Heart right ventricle (tissue), 16 donors: ENCODE measurements at regions of chr4 and their contacts with region 1.

Region 1: GRCh38 chr4:165177725-165178666 is 29.4 kb upstream of the KLHL2 start:
- DNase-seq: no peak
- ATAC-seq: no peak
- H3K4me3 ChIP-seq: no peak overlapping the region
- H3K27ac ChIP-seq: no peak overlapping the region
- H3K4me1 ChIP-seq: no peaks in the 10 kb centered on the region
- H3K27me3 ChIP-seq: no peaks in the 10 kb centered on the region
- CTCF ChIP-seq: no peak

Region 2: GRCh38 chr4:165152527-165152926 is 25.5 kb before region 1 on chr4:
- intact Hi-C with region 1: loop called in 1 of 10 experiments (anchors 2 kb)
- DNase-seq: no peak
- ATAC-seq: no peak
- H3K4me3 ChIP-seq: no peak overlapping the region
- H3K27ac ChIP-seq: no peak overlapping the region
- H3K4me1 ChIP-seq: no peaks in the 10 kb centered on the region
- H3K27me3 ChIP-seq: peaks cover 0 to 22% (median 6%) of the 10 kb centered on the region in 7 donors
- CTCF ChIP-seq: no peak